Activated CD8-positive, alpha-beta T cell treated with anti-CD3 and anti-CD28 coated beads for 36 hours (primary cell): ENCODE measurements at regions of chr17 and their contacts with region 1.

Region 1: DNA sequence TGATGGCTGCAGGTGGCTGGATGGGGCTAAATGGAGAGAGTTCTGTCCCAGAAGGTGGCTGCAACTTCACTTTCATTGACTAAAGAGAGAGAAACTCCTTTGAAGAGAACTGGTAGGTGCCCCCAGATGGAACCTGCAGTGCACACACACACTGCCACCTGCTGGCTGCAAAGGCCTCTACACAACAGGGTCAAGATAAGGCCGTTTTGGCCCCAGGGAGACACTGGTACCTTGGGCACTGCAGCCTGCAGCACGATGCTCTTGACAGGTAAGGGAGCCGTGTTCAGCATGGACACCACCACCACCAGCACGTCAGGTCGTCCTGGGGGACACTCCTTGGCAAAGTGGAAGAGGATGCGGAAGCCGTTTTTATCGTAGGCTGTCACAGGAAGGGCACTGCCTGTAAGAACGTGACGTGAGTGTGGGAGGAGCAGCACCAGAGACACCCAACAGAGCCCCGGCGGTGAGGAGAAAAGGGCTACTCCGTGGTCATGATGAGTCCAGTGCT is 22.7 kb downstream of the GGA3 start:
- DNase-seq: peak; percentile 73
- ATAC-seq: peak; percentile 66
- H3K4me3 Mint-ChIP-seq: no peak overlapping the region
- H3K27ac Mint-ChIP-seq: peak overlapping the region; percentile 76
- H3K4me1 Mint-ChIP-seq: peaks cover 36% of the 10 kb centered on the region
- H3K27me3 Mint-ChIP-seq: no peaks in the 10 kb centered on the region
- CTCF ChIP-seq: peak; percentile 73

Region 2: DNA sequence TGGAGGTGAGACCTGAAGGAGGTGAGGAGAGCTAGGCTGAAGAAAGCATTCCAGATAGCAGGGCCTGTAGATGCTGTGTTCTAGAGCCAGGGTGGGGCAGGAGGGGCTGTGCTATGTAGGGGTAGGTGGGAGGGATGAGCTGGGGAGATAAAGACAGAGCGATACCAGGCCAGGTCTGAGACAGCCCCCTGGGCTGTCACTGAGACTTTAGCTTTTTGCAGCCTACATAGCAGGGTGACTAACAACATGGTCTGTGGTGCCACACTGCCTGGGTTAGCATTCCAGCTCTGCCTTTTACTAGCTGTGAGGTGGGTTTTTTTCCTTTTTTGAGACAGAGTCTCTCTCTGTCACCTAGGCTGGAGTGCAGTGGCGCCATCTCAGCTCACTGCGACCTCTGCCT is 18.9 kb before region 1 on chr17:
- CTCF ChIA-PET with region 1: interaction called, 17 read pairs
- POLR2A ChIA-PET with region 1: interaction called, 6 read pairs
- intact Hi-C with region 1: no loop called
- DNase-seq: no peak
- ATAC-seq: no peak
- H3K4me3 Mint-ChIP-seq: no peak overlapping the region
- H3K27ac Mint-ChIP-seq: no peak overlapping the region
- H3K4me1 Mint-ChIP-seq: peaks cover 2% of the 10 kb centered on the region
- H3K27me3 Mint-ChIP-seq: no peaks in the 10 kb centered on the region
- CTCF ChIP-seq: no peak

Region 3: GRCh38 chr17:75228305-75228704 is 10.4 kb before region 1 on chr17:
- CTCF ChIA-PET with region 1: interaction called, 54 read pairs
- POLR2A ChIA-PET with region 1: interaction called, 9 read pairs
- intact Hi-C with region 1: no loop called
- DNase-seq: no peak
- ATAC-seq: no peak
- H3K4me3 Mint-ChIP-seq: no peak overlapping the region
- H3K27ac Mint-ChIP-seq: no peak overlapping the region
- H3K4me1 Mint-ChIP-seq: no peaks in the 10 kb centered on the region
- H3K27me3 Mint-ChIP-seq: no peaks in the 10 kb centered on the region
- CTCF ChIP-seq: no peak

Region 4: GRCh38 chr17:75250009-75250471 is 11.3 kb after region 1 on chr17:
- CTCF ChIA-PET with region 1: interaction called, 75 read pairs
- POLR2A ChIA-PET with region 1: interaction called, 14 read pairs
- intact Hi-C with region 1: no loop called
- DNase-seq: peak; percentile 92
- ATAC-seq: peak; percentile 97
- H3K4me3 Mint-ChIP-seq: peak overlapping the region; percentile 64
- H3K27ac Mint-ChIP-seq: peak overlapping the region; percentile 93
- H3K4me1 Mint-ChIP-seq: peaks cover 67% of the 10 kb centered on the region
- H3K27me3 Mint-ChIP-seq: no peaks in the 10 kb centered on the region
- CTCF ChIP-seq: no peak

Region 5: GRCh38 chr17:75456417-75457046 is 217.8 kb after region 1 on chr17 and contains the start of gene TMEM94:
- CTCF ChIA-PET with region 1: no interaction called
- POLR2A ChIA-PET with region 1: no interaction called
- intact Hi-C with region 1: no loop called
- DNase-seq: peak; percentile 96
- ATAC-seq: peak; percentile 97
- H3K4me3 Mint-ChIP-seq: peak within 1 kb of the TSS; percentile 89
- H3K27ac Mint-ChIP-seq: peak within 1 kb of the TSS; percentile 85
- H3K4me1 Mint-ChIP-seq: peaks cover 27% of the 10 kb centered on the region
- H3K27me3 Mint-ChIP-seq: no peaks in the 10 kb centered on the region
- CTCF ChIP-seq: no peak
- total RNA-seq, gene TMEM94: 55.3 to 56.4 TPM